ENCODE measurements at regions of chr14 and their contacts with region 1.

Region 1: GRCh38 chr14:73795972-73796371 is 55.7 kb upstream of the PTGR2 start:
- DNase-seq: no peak
- ATAC-seq: no peak
- H3K4me3 ChIP-seq: no peak overlapping the region
- H3K4me3 Mint-ChIP-seq: no peak overlapping the region
- H3K27ac ChIP-seq: no peak overlapping the region
- H3K27ac Mint-ChIP-seq: no peak overlapping the region
- H3K4me1 ChIP-seq: no peaks in the 10 kb centered on the region
- H3K4me1 Mint-ChIP-seq: no peaks in the 10 kb centered on the region
- H3K27me3 ChIP-seq: no peaks in the 10 kb centered on the region
- H3K27me3 Mint-ChIP-seq: no peaks in the 10 kb centered on the region
- CTCF ChIP-seq: no peak

Region 2: GRCh38 chr14:73777401-73777800 is 18.6 kb before region 1 on chr14:
- CTCF ChIA-PET with region 1: no interaction called
- POLR2A ChIA-PET with region 1: no interaction called
- intact Hi-C with region 1: no loop called
- DNase-seq: peak in 6 of 14 experiments; percentile 28 to 69 (median 44)
- ATAC-seq: peak; percentile 72
- H3K4me3 ChIP-seq: no peak overlapping the region
- H3K4me3 Mint-ChIP-seq: peak overlapping the region; percentile 39
- H3K27ac ChIP-seq: peak overlapping the region in 1 of 2 donors; percentile 10
- H3K27ac Mint-ChIP-seq: peak overlapping the region; percentile 73
- H3K4me1 ChIP-seq: peaks cover 57% of the 10 kb centered on the region
- H3K4me1 Mint-ChIP-seq: peaks cover 70% of the 10 kb centered on the region
- H3K27me3 ChIP-seq: no peaks in the 10 kb centered on the region
- H3K27me3 Mint-ChIP-seq: no peaks in the 10 kb centered on the region
- CTCF ChIP-seq: no peak

Region 3: DNA sequence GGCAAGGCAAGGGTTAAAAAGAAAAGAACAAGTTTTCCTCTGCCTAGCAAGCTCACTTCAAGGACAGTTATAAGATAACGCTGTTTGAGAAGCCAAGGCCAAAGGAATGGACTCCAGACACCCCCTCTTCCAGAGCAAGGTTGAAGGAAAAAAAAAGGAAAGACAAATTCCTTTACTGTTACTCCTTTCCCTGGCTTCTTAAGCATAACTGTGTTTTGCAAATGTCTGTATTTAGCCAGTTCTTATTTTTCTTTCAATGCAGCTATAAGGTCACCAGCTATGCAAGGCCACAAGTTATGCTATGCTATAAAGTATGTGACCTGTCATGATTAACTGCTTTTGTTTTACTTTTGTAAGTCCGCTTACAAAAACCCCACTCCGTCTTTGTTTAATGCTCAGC is 117.3 kb after region 1 on chr14:
- CTCF ChIA-PET with region 1: no interaction called
- POLR2A ChIA-PET with region 1: no interaction called
- intact Hi-C with region 1: no loop called
- DNase-seq: no peak
- ATAC-seq: no peak
- H3K4me3 ChIP-seq: no peak overlapping the region
- H3K4me3 Mint-ChIP-seq: no peak overlapping the region
- H3K27ac ChIP-seq: no peak overlapping the region
- H3K27ac Mint-ChIP-seq: no peak overlapping the region
- H3K4me1 ChIP-seq: no peaks in the 10 kb centered on the region
- H3K4me1 Mint-ChIP-seq: peaks cover 9% of the 10 kb centered on the region
- H3K27me3 ChIP-seq: no peaks in the 10 kb centered on the region
- H3K27me3 Mint-ChIP-seq: no peaks in the 10 kb centered on the region
- CTCF ChIP-seq: no peak

Region 4: DNA sequence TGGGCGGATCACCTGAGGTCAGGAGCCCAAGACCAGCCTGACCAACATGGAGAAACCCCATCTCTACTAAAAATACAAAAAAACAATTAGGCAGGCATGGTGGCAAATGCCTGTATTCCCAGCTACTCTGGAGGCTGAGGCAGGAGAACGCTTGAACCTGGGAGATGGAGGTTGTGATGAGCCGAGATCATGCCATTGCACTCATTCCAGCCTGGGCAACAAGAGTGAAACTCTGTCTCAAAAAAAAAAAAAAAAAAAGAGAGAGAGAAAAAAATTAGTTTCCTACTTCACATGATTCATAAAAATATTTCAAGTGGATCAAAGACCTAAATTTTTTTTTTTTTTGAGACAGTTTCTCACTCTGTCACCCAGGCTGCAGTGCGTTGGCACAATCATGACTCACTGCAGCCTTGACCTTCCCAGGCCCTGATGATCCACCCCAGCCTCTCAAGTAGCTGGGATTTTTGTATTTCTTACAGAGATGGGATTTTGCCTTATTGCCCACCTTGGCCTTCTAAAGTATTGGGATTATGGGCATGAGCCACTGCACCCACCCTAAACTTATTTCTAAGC is 941.9 kb after region 1 on chr14:
- CTCF ChIA-PET with region 1: no interaction called
- POLR2A ChIA-PET with region 1: no interaction called
- intact Hi-C with region 1: no loop called
- DNase-seq: no peak
- ATAC-seq: no peak
- H3K4me3 ChIP-seq: no peak overlapping the region
- H3K4me3 Mint-ChIP-seq: no peak overlapping the region
- H3K27ac ChIP-seq: no peak overlapping the region
- H3K27ac Mint-ChIP-seq: no peak overlapping the region
- H3K4me1 ChIP-seq: no peaks in the 10 kb centered on the region
- H3K4me1 Mint-ChIP-seq: no peaks in the 10 kb centered on the region
- H3K27me3 ChIP-seq: no peaks in the 10 kb centered on the region
- H3K27me3 Mint-ChIP-seq: no peaks in the 10 kb centered on the region
- CTCF ChIP-seq: no peak

Region 5: GRCh38 chr14:75205591-75205990 is 1409.6 kb after region 1 on chr14:
- CTCF ChIA-PET with region 1: no interaction called
- POLR2A ChIA-PET with region 1: no interaction called
- intact Hi-C with region 1: loop called in 1 of 2 experiments (anchors 5 kb)
- DNase-seq: peak in 3 of 14 experiments; percentile 19 to 58 (median 52)
- ATAC-seq: no peak
- H3K4me3 ChIP-seq: no peak overlapping the region
- H3K4me3 Mint-ChIP-seq: no peak overlapping the region
- H3K27ac ChIP-seq: no peak overlapping the region
- H3K27ac Mint-ChIP-seq: no peak overlapping the region
- H3K4me1 ChIP-seq: peaks cover 11% of the 10 kb centered on the region
- H3K4me1 Mint-ChIP-seq: peaks cover 13% of the 10 kb centered on the region
- H3K27me3 ChIP-seq: no peaks in the 10 kb centered on the region
- H3K27me3 Mint-ChIP-seq: no peaks in the 10 kb centered on the region
- CTCF ChIP-seq: no peak